Dendritic cell treated with granulocyte-macrophage colony-stimulating factor and Interleukin-4, amounts not matched to agents 40 ng/mL and 50 ng/mL, for 4 days (primary cell): ENCODE measurements at regions of chr19 and their contacts with region 1.

Region 1: DNA sequence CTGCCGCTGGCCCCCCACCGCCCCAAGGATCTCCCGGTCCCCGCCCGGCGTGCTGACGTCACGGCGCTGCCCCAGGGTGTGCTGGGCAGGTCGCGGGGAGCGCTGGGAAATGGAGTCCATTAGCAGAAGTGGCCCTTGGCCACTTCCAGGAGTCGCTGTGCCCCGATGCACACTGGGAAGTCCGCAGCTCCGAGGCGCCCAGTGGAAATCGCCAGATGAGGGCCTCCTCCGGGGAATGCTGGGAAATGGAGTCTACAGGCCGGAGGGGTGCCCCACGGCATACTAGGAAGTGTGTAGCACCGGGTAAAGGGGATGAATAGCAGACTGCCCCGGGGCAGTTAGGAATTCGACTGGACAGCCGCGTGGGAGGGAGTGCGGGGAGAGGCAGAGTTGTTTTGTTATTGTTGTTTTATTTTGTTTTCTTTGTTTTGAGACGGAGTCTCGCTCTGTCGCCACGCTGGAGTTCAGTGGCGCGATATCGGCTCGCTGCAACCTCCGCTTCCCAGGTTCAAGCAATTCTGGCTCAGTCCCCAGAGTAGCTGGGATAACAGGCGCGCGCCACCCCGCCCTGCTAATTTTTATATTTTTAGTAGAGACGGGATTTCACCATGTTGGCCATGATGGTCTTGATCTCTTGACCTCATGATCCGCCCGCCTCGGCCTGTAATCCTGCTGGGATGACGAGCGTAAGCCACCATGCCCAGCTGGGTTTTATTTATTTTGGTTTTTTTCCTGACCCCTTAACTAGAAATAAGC is at the start of gene PPP1R12C:
- H3K4me3 Mint-ChIP-seq: peak within 1 kb of the TSS; percentile 98
- H3K27ac Mint-ChIP-seq: peak within 1 kb of the TSS; percentile 92
- H3K4me1 Mint-ChIP-seq: peaks cover 56% of the 10 kb centered on the region
- H3K27me3 Mint-ChIP-seq: peaks cover 12% of the 10 kb centered on the region

Region 2: GRCh38 chr19:55099533-55100506 is 18.0 kb before region 1 on chr19:
- intact Hi-C with region 1: loop called (anchors 2 kb)
- H3K4me3 Mint-ChIP-seq: no peak overlapping the region
- H3K27ac Mint-ChIP-seq: no peak overlapping the region
- H3K4me1 Mint-ChIP-seq: peaks cover 49% of the 10 kb centered on the region
- H3K27me3 Mint-ChIP-seq: no peaks in the 10 kb centered on the region

Region 3: GRCh38 chr19:55160128-55160985 is 42.5 kb after region 1 on chr19:
- intact Hi-C with region 1: loop called (anchors 1 kb)
- H3K4me3 Mint-ChIP-seq: peak overlapping the region; percentile 27
- H3K27ac Mint-ChIP-seq: no peak overlapping the region
- H3K4me1 Mint-ChIP-seq: peaks cover 20% of the 10 kb centered on the region
- H3K27me3 Mint-ChIP-seq: peaks cover 84% of the 10 kb centered on the region